Mammary epithelial cell (primary cell): ENCODE measurements at regions of chr1 and their contacts with region 1.

Region 1: DNA sequence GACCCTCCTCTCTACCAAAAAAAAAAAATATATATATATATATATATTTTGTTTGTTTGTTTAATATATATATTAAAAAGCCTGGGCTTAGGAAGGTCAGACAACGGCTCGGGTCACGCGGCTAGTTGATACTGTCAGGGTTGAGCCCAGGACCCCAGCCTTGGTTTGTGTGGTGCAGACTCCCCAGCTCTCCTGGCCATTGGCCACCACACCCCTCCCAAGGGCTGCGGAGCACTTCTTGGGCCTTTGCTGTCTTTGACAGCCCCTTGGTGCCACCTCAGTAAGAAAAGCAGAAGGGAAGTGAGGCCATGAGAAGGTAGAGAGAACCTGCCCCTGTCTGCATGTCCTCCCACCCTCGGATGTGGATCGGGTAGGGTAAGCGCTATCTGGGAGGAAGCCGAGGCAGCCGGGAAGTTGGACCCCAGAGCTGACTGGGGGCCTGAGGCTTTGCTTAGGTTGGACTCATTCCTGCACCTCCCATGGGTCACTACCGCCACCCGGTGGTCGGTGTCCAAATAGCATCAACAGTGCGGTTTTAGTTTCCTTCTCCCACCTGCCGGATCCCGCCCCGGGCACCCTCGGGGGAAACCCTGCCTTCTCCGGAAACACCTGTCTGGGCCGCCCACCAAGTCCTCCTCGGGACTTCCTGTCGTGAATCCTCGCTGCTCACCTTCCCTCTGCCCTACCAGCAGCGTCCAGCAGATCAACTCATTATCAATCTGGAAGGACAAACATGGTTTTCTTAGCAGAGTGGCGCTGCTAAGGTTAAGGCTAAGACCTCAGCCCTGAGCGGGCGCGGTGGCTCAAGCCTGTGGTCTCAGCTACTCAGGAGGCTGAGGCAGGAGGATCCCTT is 29.8 kb upstream of the GNPAT start:
- DNase-seq: peak; percentile 64
- H3K4me3 ChIP-seq: peak overlapping the region; percentile 37 to 58 (median 37)
- H3K27ac ChIP-seq: no peak overlapping the region
- H3K4me1 ChIP-seq: peaks cover under 1% of the 10 kb centered on the region
- H3K27me3 ChIP-seq: no peaks in the 10 kb centered on the region
- CTCF ChIP-seq: peak; percentile 76 to 95

Region 2: GRCh38 chr1:230632273-230632873 is 578.9 kb before region 1 on chr1:
- CTCF ChIA-PET with region 1: no interaction called
- dilution Hi-C with region 1: no loop called
- in situ Hi-C with region 1: loop called in 1 of 2 experiments (anchors 25 kb)
- intact Hi-C with region 1: loop called (anchors 2 kb)
- DNase-seq: peak; percentile 39
- H3K4me3 ChIP-seq: no peak overlapping the region
- H3K27ac ChIP-seq: no peak overlapping the region
- H3K4me1 ChIP-seq: peaks cover 16% of the 10 kb centered on the region
- H3K27me3 ChIP-seq: no peaks in the 10 kb centered on the region
- CTCF ChIP-seq: peak; percentile 68 to 85

Region 3: GRCh38 chr1:230797942-230798418 is 413.3 kb before region 1 on chr1:
- CTCF ChIA-PET with region 1: no interaction called
- dilution Hi-C with region 1: no loop called
- in situ Hi-C with region 1: loop called (anchors 10 to 25 kb)
- intact Hi-C with region 1: loop called (anchors 1 kb)
- DNase-seq: peak; percentile 33
- H3K4me3 ChIP-seq: no peak overlapping the region
- H3K27ac ChIP-seq: no peak overlapping the region
- H3K4me1 ChIP-seq: no peaks in the 10 kb centered on the region
- H3K27me3 ChIP-seq: no peaks in the 10 kb centered on the region
- CTCF ChIP-seq: peak; percentile 54 to 80

Region 4: DNA sequence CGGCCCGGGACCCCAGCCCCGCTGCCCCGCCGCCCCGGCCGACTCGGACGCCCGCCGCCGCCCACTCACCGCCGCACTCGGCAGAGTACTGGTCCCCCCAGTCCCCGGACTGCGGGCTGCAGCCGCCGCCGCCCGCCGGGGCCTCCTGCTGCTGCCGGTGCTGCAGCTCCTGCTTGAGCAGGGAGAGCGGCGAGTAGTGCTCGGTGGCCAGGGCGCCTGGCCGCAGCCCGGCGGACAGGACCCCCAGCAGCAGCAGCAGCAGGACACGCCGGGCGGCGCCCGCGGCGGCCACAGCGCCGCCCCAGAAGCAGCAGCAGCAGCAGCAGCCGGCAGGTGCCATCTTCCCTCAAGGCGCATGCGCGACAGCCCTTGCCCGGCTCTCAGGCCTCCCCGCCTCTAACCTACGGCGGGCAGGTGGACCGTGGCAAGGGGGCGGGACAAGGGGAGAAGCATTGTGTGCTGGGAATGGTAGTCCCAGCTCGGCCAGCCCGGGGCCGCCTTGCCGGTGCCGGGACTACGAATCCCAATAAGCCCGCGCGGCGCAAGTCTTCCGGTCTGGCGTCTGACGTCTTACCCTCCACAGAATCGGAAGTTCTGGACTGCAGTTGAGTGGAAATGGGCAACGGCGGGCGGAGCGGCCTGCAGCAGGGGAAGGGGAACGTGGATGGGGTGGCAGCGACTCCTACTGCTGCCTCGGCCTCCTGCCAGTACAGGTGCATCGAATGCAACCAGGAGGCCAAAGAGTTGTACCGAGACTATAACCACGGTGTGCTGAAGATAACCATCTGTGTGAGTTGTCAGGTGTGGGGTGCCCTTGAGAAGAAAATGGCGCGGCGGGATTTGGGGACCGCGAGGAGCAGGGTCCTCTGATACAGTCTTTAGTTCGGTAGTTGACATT is 232.5 kb before region 1 on chr1 and contains the starts of genes ARV1 and TTC13:
- CTCF ChIA-PET with region 1: no interaction called
- dilution Hi-C with region 1: no loop called
- in situ Hi-C with region 1: no loop called
- intact Hi-C with region 1: loop called (anchors 2 kb)
- DNase-seq: peak; percentile 99
- H3K4me3 ChIP-seq: peak within 1 kb of the TSS; percentile 70 to 84 (median 84)
- H3K27ac ChIP-seq: peak within 1 kb of the TSS; percentile 39
- H3K4me1 ChIP-seq: peaks cover 6% of the 10 kb centered on the region
- H3K27me3 ChIP-seq: no peaks in the 10 kb centered on the region
- CTCF ChIP-seq: peak; percentile 26 to 47
- total RNA-seq, gene ARV1: 14.5 to 22.4 TPM
- total RNA-seq, gene TTC13: 11.9 to 12.5 TPM

Region 5: GRCh38 chr1:231124746-231125145 is 86.5 kb before region 1 on chr1:
- CTCF ChIA-PET with region 1: no interaction called
- dilution Hi-C with region 1: no loop called
- in situ Hi-C with region 1: no loop called
- intact Hi-C with region 1: no loop called
- DNase-seq: no peak
- H3K4me3 ChIP-seq: no peak overlapping the region
- H3K27ac ChIP-seq: no peak overlapping the region
- H3K4me1 ChIP-seq: no peaks in the 10 kb centered on the region
- H3K27me3 ChIP-seq: no peaks in the 10 kb centered on the region
- CTCF ChIP-seq: no peak

Region 6: DNA sequence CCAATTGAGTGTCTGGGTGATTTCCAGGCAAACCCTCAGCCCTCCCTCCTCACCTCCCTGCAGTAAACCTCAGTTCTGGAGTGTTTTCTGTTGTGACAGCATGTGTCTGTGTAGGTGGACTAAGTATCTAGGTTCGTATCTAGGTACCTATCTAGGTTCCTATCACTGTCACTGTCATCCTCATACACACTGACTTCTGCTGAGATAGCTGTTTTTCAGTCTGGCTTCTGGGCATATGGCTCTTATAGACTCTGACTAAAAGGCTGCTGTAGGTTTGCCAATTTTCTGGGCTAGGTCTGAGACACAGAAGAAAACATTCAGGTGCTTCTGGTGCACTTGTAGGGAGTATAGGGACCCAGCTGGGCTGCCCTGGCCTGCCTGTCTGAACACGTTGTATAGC is 57.5 kb before region 1 on chr1:
- CTCF ChIA-PET with region 1: no interaction called
- dilution Hi-C with region 1: loop called (anchors 5 kb)
- in situ Hi-C with region 1: no loop called
- intact Hi-C with region 1: no loop called
- DNase-seq: no peak
- H3K4me3 ChIP-seq: no peak overlapping the region
- H3K27ac ChIP-seq: no peak overlapping the region
- H3K4me1 ChIP-seq: no peaks in the 10 kb centered on the region
- H3K27me3 ChIP-seq: peaks cover 2% of the 10 kb centered on the region
- CTCF ChIP-seq: no peak

Region 7: DNA sequence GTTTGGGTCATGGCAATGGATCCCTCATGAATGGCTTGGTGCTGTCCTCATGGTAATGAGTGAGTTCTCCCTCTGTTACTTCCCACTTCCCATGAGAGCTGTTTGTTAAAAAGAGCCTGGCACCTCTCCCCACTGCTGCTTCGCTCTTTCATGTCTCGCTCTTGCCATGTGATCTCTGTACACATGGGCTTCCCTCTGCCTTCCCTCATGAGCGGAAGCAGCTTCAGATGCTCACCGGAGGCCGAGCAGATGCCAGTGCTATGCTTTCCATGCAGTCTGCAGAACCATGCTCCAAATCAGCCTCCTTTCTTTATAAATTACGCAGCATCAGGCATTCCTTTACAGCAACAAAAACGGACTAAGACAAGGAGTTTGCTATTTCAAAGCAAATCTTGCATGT is 14.9 kb after region 1 on chr1:
- CTCF ChIA-PET with region 1: no interaction called
- dilution Hi-C with region 1: no loop called
- in situ Hi-C with region 1: no loop called
- intact Hi-C with region 1: no loop called
- DNase-seq: no peak
- H3K4me3 ChIP-seq: no peak overlapping the region
- H3K27ac ChIP-seq: no peak overlapping the region
- H3K4me1 ChIP-seq: no peaks in the 10 kb centered on the region
- H3K27me3 ChIP-seq: no peaks in the 10 kb centered on the region
- CTCF ChIP-seq: no peak